ENCODE measurements at regions of chr12 and their contacts with region 1.

Region 1: DNA sequence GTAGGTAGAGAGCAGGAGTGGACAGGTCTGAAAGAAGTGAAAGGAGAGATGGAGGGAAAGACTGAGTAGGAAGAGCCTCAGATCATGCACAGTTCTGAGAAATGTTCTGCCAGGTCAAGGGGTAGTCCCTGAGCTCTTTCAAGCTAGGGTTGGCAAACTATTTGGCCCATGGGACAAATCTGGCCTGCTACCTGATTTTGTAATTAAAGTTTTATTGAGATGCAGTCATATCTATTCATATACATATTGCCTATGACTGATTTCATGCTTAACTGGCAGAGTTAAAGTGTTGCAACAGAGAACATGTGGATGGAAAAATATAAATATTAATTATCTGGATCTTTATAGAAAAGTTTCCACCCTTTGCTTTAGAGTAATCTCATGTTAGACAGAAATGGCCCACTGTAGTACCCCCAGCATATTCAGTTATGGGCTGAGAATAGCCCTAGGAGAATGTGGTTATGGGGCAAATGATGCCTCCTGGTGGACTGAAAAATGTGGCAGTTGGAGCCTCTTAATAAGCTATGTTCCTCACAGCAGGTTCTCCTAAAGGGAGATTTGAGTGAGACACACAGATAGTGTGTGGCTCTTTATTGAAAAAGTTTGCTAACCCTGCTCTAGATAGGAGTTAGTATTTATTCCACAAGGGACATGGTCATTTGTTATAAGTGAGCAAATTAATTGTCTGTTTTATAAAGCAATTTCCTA is 476.9 kb downstream of the LRIG3 start:
- DNase-seq: no peak
- H3K4me3 ChIP-seq: no peak overlapping the region
- H3K27ac ChIP-seq: no peak overlapping the region
- H3K4me1 ChIP-seq: no peaks in the 10 kb centered on the region
- H3K27me3 ChIP-seq: no peaks in the 10 kb centered on the region
- CTCF ChIP-seq: peak; percentile 57

Region 2: GRCh38 chr12:58233886-58234285 is 209.5 kb before region 1 on chr12:
- intact Hi-C with region 1: no loop called
- DNase-seq: no peak
- H3K4me3 ChIP-seq: no peak overlapping the region
- H3K27ac ChIP-seq: no peak overlapping the region
- H3K4me1 ChIP-seq: peaks cover 7% of the 10 kb centered on the region
- H3K27me3 ChIP-seq: no peaks in the 10 kb centered on the region
- CTCF ChIP-seq: no peak

Region 3: DNA sequence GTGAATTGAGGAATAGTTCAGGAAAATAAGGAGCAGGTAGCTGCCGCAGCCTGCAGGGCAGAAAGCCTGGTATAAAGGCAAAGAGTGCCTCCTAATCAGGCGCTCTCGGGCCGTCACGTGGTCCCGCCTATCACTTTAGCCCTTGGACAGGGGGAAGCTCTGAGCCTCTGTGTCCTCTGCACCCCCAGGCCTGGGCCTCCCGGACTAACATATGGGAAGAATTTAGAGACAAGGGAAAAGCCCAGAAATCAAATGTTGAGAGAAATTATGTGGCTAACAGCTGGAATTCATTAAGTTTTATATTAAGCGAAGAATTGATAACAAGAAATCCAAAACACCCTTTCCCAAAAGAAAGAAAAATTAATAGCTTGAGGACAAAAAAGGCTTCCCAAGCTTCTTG is 84.3 kb before region 1 on chr12:
- intact Hi-C with region 1: loop called (anchors 10 kb)
- DNase-seq: no peak
- H3K4me3 ChIP-seq: no peak overlapping the region
- H3K27ac ChIP-seq: no peak overlapping the region
- H3K4me1 ChIP-seq: no peaks in the 10 kb centered on the region
- H3K27me3 ChIP-seq: peaks cover 2% of the 10 kb centered on the region
- CTCF ChIP-seq: no peak